ENCODE measurements at regions of chr10 and their contacts with region 1.

Region 1: GRCh38 chr10:82982110-82982608 is 1107.2 kb downstream of the NRG3 start:
- DNase-seq: no peak
- H3K4me3 ChIP-seq: no peak overlapping the region
- H3K27ac ChIP-seq: no peak overlapping the region
- H3K4me1 ChIP-seq: no peaks in the 10 kb centered on the region
- H3K27me3 ChIP-seq: no peaks in the 10 kb centered on the region
- CTCF ChIP-seq: no peak
- EP300 ChIP-seq: no peak
- POLR2A ChIP-seq: no peak

Region 2: GRCh38 chr10:83075016-83075814 is 93.1 kb after region 1 on chr10:
- in situ Hi-C with region 1: loop called in 1 of 4 experiments (anchors 25 kb)
- intact Hi-C with region 1: no loop called
- DNase-seq: no peak
- H3K4me3 ChIP-seq: no peak overlapping the region
- H3K27ac ChIP-seq: no peak overlapping the region
- H3K4me1 ChIP-seq: no peaks in the 10 kb centered on the region
- H3K27me3 ChIP-seq: no peaks in the 10 kb centered on the region
- CTCF ChIP-seq: no peak
- EP300 ChIP-seq: no peak
- POLR2A ChIP-seq: no peak